Psoas muscle (tissue), 8 donors: ENCODE measurements at regions of chr9 and their contacts with region 1.

Region 1: DNA sequence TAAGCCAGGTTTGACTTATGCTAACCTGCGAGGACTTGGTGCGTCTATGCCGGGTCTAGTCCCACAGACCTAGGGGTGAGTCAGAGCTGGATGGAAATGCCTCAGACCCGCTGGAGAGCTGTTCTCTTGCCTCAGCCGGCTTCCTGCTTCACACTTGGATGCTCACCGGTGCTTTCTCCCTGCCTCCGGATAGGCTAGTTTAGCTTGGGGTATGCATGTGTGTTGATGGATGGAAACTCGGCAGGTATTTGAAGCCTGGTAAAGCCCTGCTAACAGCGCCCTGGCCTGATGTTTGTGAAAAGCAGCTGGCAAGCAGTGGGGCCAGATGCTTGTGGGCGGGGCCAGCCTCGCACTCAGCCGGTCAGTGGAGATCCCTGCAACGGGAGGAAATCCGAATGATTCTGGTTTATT is 29.3 kb downstream of the PRRC2B start:
- DNase-seq: peak; percentile 51 to 72
- ATAC-seq: peak; percentile 75 to 80 (median 79)
- H3K4me3 ChIP-seq: peak overlapping the region; percentile 16
- H3K27ac ChIP-seq: peak overlapping the region; percentile 84
- H3K4me1 ChIP-seq: peaks cover 66% of the 10 kb centered on the region
- H3K27me3 ChIP-seq: no peaks in the 10 kb centered on the region
- CTCF ChIP-seq: no peak

Region 2: GRCh38 chr9:131382850-131383729 is 40.1 kb before region 1 on chr9:
- intact Hi-C with region 1: loop called in 1 of 2 experiments (anchors 5 kb)
- DNase-seq: peak; percentile 49 to 76
- ATAC-seq: peak; percentile 97 to 99 (median 98)
- H3K4me3 ChIP-seq: peak overlapping the region; percentile 19
- H3K27ac ChIP-seq: peak overlapping the region; percentile 87
- H3K4me1 ChIP-seq: peaks cover 16% of the 10 kb centered on the region
- H3K27me3 ChIP-seq: no peaks in the 10 kb centered on the region
- CTCF ChIP-seq: no peak

Region 3: GRCh38 chr9:131393622-131394463 is 29.3 kb before region 1 on chr9 and contains the start of gene PRRC2B:
- intact Hi-C with region 1: loop called in 1 of 2 experiments (anchors 2 kb)
- DNase-seq: peak; percentile 91 to 93
- ATAC-seq: peak; percentile 87 to 89 (median 88)
- H3K4me3 ChIP-seq: peak within 1 kb of the TSS; percentile 76
- H3K27ac ChIP-seq: peak within 1 kb of the TSS; percentile 95
- H3K4me1 ChIP-seq: peaks cover 45% of the 10 kb centered on the region
- H3K27me3 ChIP-seq: no peaks in the 10 kb centered on the region
- CTCF ChIP-seq: peak; percentile 58
- total RNA-seq, gene PRRC2B: 63.6 to 114 (median 78.7) TPM